Naive thymus-derived CD8-positive, alpha-beta T cell (primary cell): ENCODE measurements at regions of chr3 and their contacts with region 1.

Region 1: DNA sequence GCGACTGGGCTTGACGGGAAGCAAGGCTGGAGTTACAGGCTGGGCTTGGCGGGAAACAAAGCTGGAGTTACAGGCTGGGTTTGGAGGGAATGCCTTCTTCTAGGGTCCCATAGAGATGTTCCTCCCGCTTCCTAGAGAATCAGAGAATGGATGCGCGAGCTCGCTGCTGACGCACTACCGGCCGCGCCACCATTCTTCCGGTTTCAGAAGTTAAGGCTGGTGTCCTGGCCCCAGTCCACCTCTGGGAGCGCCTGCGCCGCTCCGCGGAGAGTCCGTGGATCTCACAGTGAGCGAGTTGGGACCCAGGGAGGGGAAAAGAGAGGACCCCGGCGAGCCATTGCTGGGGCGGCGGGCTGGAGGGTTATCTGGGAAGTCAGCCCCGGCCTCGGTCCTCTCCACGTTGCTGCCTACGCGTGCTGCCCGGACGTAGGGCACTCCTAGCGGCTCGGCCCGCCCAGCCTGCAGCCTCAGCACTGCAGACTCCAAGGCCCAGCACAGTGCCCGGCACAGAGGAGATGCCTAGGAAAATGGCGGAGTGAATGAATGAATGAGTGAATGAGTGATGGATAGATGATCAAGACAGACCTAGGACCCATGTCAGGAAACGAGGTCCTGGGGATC is at the start of gene ZNF502:
- DNase-seq: peak; percentile 31 to 73 (median 53)
- ATAC-seq: peak; percentile 93
- H3K4me3 Mint-ChIP-seq: peak within 1 kb of the TSS; percentile 87 to 98 (median 91)
- H3K27ac Mint-ChIP-seq: peak within 1 kb of the TSS; percentile 64 to 96 (median 79)
- H3K4me1 Mint-ChIP-seq: peaks cover 6 to 22% (median 14%) of the 10 kb centered on the region in 4 donors
- H3K27me3 Mint-ChIP-seq: peaks cover 11 to 30% (median 16%) of the 10 kb centered on the region in 5 donors
- polyA plus RNA-seq, gene ZNF502: 2.3 to 3.4 (median 2.4) TPM

Region 2: DNA sequence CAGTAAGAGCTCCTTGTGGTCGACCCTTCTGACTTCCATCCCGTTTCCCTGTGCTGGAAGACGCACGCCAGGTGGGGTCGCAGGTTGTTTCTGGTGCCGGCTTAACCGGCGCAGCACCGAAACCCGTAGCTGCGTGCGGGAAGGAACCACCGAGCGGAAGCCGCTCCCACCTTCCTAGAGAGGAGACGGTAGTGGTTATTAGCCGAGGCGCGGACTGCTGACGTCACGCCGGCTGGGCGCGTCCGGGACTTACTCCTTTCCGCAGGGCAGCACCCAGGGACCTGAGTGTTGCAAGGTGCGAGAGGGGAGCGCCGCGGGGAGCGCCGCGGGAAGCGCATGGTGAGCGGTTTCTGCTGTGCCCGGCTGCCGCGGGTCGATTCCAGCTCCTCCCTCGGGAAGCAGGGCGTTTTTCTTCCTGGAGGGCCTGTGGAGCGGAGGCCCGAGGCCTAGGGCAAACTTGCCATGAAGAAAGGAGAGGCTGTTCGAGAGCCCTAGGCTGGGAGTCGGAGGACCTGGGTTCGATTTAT is 16.9 kb after region 1 on chr3 and contains the start of gene ZNF501:
- POLR2A ChIA-PET with region 1: interaction called, 19 read pairs
- DNase-seq: peak; percentile 56 to 89 (median 77)
- ATAC-seq: peak; percentile 96
- H3K4me3 Mint-ChIP-seq: peak within 1 kb of the TSS; percentile 85 to 98 (median 93)
- H3K27ac Mint-ChIP-seq: peak within 1 kb of the TSS; percentile 57 to 95 (median 86)
- H3K4me1 Mint-ChIP-seq: peaks cover 9 to 23% (median 15%) of the 10 kb centered on the region in 4 donors
- H3K27me3 Mint-ChIP-seq: no peaks in the 10 kb centered on the region
- polyA plus RNA-seq, gene ZNF501: 1.6 to 2.3 (median 2.2) TPM